Activated T-helper 1 cell treated with anti-CD3 and anti-CD28 coated beads, Interleukin-12 subunit alpha, Interleukin-12 subunit beta, Interleukin-2, Interleukin-4 antibody, amounts not matched to agents 30 ng/mL and 10 ng/mL and 1 ng/mL, durations not matched to agents 14 hours and 24 hours and 36 hours (primary cell): ENCODE measurements at regions of chr22 and their contacts with region 1.

Region 1: DNA sequence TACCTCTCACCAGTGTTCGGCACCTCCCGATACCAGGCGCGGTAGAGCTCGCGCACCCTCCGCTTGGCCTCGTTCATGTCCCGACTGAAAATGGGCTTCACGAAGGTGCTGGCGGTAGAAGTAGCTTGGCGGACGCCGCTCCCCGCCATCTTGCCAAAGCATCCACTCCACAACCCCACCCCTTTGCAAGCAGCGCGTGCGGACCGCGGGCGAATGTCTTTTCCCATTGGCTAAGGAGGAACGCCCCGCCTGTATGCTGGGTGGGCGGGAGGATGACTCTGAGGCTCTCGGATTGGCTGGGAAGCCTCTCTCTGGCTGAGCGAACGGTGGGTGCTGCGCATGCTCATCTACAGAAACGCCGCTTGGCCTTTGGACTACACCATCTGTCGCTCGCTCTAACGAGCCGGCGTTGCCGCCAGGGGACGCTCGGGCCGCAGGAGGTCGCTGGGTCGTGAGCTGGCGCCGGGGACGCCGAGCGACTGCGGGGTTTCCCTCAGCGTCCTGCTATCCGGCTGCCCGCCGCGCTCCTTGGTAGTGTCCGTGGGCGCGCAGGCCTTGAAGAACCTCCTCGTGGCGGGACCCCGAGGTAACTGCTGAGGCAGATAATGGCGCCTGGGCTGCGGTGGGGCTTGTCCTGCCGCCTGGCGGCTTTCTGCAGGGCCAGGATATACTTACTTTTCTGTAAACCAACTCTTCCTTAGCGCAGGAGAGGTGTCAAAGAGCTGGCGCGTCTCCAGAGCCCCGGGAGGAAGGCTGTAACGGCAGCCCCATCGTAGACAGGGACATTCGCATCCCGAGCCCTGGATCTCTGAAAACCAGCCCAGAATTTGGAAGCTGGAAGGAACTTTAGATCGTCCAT is at the start of gene NDUFA6:
- DNase-seq: peak; percentile 99
- H3K4me3 Mint-ChIP-seq: peak within 1 kb of the TSS; percentile 98
- H3K27ac Mint-ChIP-seq: peak within 1 kb of the TSS; percentile 99
- H3K4me1 Mint-ChIP-seq: peaks cover 29% of the 10 kb centered on the region
- H3K27me3 Mint-ChIP-seq: no peaks in the 10 kb centered on the region
- total RNA-seq, gene NDUFA6: 81.6 and 85.8 TPM in 2 replicates

Region 2: DNA sequence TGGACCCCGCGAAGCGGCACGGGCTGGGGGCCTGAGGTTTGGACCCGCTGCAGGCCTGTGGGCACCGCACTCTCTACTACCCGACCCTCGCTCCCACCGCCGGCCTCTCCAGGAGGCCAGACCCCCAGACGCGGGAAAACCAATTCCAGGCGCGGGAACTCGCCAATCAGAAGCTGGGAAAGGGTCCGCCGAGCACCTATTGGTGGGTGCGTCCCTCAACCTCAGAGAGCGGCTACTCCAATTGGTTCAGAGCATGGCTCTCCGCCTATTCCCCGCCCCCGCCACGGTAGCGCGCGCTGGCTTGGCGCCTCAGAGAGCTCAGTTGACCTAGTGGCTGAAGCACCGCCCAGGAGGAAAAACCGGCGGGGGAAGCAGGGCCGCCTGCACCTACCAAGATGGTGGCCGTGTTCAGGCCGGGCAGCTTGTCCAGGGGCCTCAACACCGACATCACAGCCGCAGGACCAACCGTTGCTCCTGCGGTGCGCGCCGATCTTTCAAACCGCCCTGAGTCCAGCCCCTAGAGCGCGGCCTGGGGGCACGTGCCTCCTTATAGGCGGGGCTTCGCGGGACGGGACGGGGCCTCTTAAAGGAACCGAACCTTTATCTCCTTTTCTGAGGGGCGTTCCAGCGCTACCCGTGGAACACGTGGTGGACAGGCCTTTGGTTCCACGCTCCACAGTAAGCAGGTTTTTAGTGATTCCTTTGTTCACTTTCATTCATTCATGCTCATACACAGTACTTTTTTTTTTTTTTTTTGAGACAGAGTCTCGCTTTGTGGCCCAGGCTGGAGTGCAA is 144.0 kb before region 1 on chr22 and contains the start of gene CENPM:
- intact Hi-C with region 1: loop called (anchors 1 kb)
- DNase-seq: peak; percentile 93
- H3K4me3 Mint-ChIP-seq: peak within 1 kb of the TSS; percentile 92
- H3K27ac Mint-ChIP-seq: peak within 1 kb of the TSS; percentile 93
- H3K4me1 Mint-ChIP-seq: peaks cover 47% of the 10 kb centered on the region
- H3K27me3 Mint-ChIP-seq: no peaks in the 10 kb centered on the region
- total RNA-seq, gene CENPM: 82.0 and 84.6 TPM in 2 replicates

Region 3: GRCh38 chr22:42070517-42071422 is 20.1 kb before region 1 on chr22 and contains the start of gene NAGA:
- intact Hi-C with region 1: loop called (anchors 1 kb)
- DNase-seq: peak; percentile 91
- H3K4me3 Mint-ChIP-seq: peak within 1 kb of the TSS; percentile 92
- H3K27ac Mint-ChIP-seq: peak within 1 kb of the TSS; percentile 94
- H3K4me1 Mint-ChIP-seq: peaks cover 53% of the 10 kb centered on the region
- H3K27me3 Mint-ChIP-seq: peaks cover 2% of the 10 kb centered on the region
- total RNA-seq, gene NAGA: 30.5 and 30.9 TPM in 2 replicates

Region 4: DNA sequence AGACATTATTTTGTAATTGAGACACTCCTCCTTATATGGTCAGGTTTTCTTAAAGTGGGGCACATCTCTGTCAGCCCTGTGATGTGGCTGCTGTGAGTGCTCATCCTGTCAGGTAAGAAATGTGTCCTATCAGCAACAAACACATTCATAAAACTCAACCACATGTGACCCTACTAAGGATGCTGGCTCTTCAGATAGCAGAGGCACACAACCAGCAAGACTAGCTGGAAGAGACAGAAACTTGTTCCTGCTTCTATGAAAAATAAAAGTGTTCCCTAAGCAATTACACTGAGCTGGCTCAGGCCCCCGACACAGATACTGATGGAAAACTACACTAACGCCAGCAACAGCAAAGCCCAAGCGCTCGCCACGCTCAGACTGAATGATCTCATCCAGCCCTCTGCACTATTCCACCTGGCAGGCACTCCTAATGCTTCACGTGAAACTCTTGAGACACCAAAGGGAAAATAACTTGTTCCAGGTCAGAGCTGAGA is 89.6 kb after region 1 on chr22:
- intact Hi-C with region 1: loop called (anchors 10 kb)
- DNase-seq: peak; percentile 32
- H3K4me3 Mint-ChIP-seq: peak overlapping the region; percentile 12
- H3K27ac Mint-ChIP-seq: peak overlapping the region; percentile 50
- H3K4me1 Mint-ChIP-seq: peaks cover 84% of the 10 kb centered on the region
- H3K27me3 Mint-ChIP-seq: no peaks in the 10 kb centered on the region

Region 5: GRCh38 chr22:42369245-42370041 is 278.6 kb after region 1 on chr22:
- intact Hi-C with region 1: loop called (anchors 2 kb)
- DNase-seq: peak; percentile 82
- H3K4me3 Mint-ChIP-seq: peak overlapping the region; percentile 85
- H3K27ac Mint-ChIP-seq: peak overlapping the region; percentile 30
- H3K4me1 Mint-ChIP-seq: peaks cover 7% of the 10 kb centered on the region
- H3K27me3 Mint-ChIP-seq: peaks cover 40% of the 10 kb centered on the region

Region 6: GRCh38 chr22:42614312-42615091 is 523.7 kb after region 1 on chr22 and contains the start of gene POLDIP3:
- intact Hi-C with region 1: loop called (anchors 1 kb)
- DNase-seq: peak; percentile 98
- H3K4me3 Mint-ChIP-seq: peak within 1 kb of the TSS; percentile 92
- H3K27ac Mint-ChIP-seq: peak within 1 kb of the TSS; percentile 98
- H3K4me1 Mint-ChIP-seq: peaks cover 33% of the 10 kb centered on the region
- H3K27me3 Mint-ChIP-seq: no peaks in the 10 kb centered on the region
- total RNA-seq, gene POLDIP3: 77.9 and 87.2 TPM in 2 replicates